SK-N-SH (cell line): ENCODE measurements at regions of chr12 and their contacts with region 1.

Region 1: GRCh38 chr12:118135788-118136558 is at the start of gene PEBP1:
- DNase-seq: peak; percentile 97
- H3K4me3 ChIP-seq: peak within 1 kb of the TSS; percentile 70 to 81
- H3K27ac ChIP-seq: peak within 1 kb of the TSS; percentile 57 to 61
- H3K4me1 ChIP-seq: peaks cover 0 to 4% of the 10 kb centered on the region in 2 experiments; a peak in 1 of 4 replicates
- H3K27me3 ChIP-seq: no peaks in the 10 kb centered on the region
- CTCF ChIP-seq: no peak
- EP300 ChIP-seq: no peak
- RAD21 ChIP-seq: no peak
- polyA plus RNA-seq, gene PEBP1: 186 and 219 TPM in 2 replicates

Region 2: GRCh38 chr12:118052324-118053070 is 83.5 kb before region 1 on chr12:
- CTCF ChIA-PET with region 1: no interaction called
- POLR2A ChIA-PET with region 1: no interaction called
- DNase-seq: no peak
- H3K4me3 ChIP-seq: no peak overlapping the region
- H3K27ac ChIP-seq: peak overlapping the region; percentile 53 to 86; a peak in 3 of 4 replicates
- H3K4me1 ChIP-seq: peaks cover 0 to 24% of the 10 kb centered on the region in 2 experiments; a peak in 3 of 4 replicates
- H3K27me3 ChIP-seq: no peaks in the 10 kb centered on the region
- CTCF ChIP-seq: no peak
- EP300 ChIP-seq: peak in 1 of 2 experiments; percentile 86; a peak in 2 of 4 replicates
- RAD21 ChIP-seq: no peak

Region 3: GRCh38 chr12:118073768-118074167 is 62.2 kb before region 1 on chr12:
- CTCF ChIA-PET with region 1: no interaction called
- POLR2A ChIA-PET with region 1: no interaction called
- DNase-seq: no peak
- H3K4me3 ChIP-seq: no peak overlapping the region
- H3K27ac ChIP-seq: no peak overlapping the region
- H3K4me1 ChIP-seq: no peaks in the 10 kb centered on the region
- H3K27me3 ChIP-seq: no peaks in the 10 kb centered on the region
- CTCF ChIP-seq: no peak
- EP300 ChIP-seq: no peak
- RAD21 ChIP-seq: no peak

Region 4: GRCh38 chr12:118120579-118121363 is 15.2 kb before region 1 on chr12:
- CTCF ChIA-PET with region 1: interaction called, 10 read pairs
- POLR2A ChIA-PET with region 1: interaction called, 10 read pairs
- DNase-seq: peak; percentile 86
- H3K4me3 ChIP-seq: no peak overlapping the region
- H3K27ac ChIP-seq: peak overlapping the region; percentile 31 to 47; a peak in 2 of 4 replicates
- H3K4me1 ChIP-seq: no peaks in the 10 kb centered on the region
- H3K27me3 ChIP-seq: no peaks in the 10 kb centered on the region
- CTCF ChIP-seq: peak; percentile 48
- EP300 ChIP-seq: no peak
- RAD21 ChIP-seq: peak; percentile 60